Endothelial cell of umbilical vein (primary cell): ENCODE measurements at regions of chr11 and their contacts with region 1.

Region 1: GRCh38 chr11:61446211-61446651 is 16.3 kb downstream of the SDHAF2 start:
- DNase-seq: peak; percentile 93
- H3K4me3 ChIP-seq: no peak overlapping the region
- H3K27ac ChIP-seq: no peak overlapping the region
- H3K4me1 ChIP-seq: no peaks in the 10 kb centered on the region
- H3K27me3 ChIP-seq: no peaks in the 10 kb centered on the region
- CTCF ChIP-seq: peak; percentile 91 to 94
- POLR2A ChIP-seq: no peak

Region 2: GRCh38 chr11:61429691-61430582 is 16.3 kb before region 1 on chr11 and contains the starts of genes CPSF7 and SDHAF2:
- CTCF ChIA-PET with region 1: interaction called, 66 read pairs
- POLR2A ChIA-PET with region 1: no interaction called
- dilution Hi-C with region 1: no loop called
- intact Hi-C with region 1: no loop called
- DNase-seq: peak; percentile 94
- H3K4me3 ChIP-seq: peak within 1 kb of the TSS; percentile 87 to 100 (median 100)
- H3K27ac ChIP-seq: peak within 1 kb of the TSS; percentile 99
- H3K4me1 ChIP-seq: peaks cover 20% of the 10 kb centered on the region
- H3K27me3 ChIP-seq: no peaks in the 10 kb centered on the region
- CTCF ChIP-seq: no peak
- POLR2A ChIP-seq: peak; percentile 91
- total RNA-seq, gene CPSF7: 77.0 and 78.2 TPM in 2 replicates
- total RNA-seq, gene SDHAF2: 40.3 and 44.5 TPM in 2 replicates

Region 3: DNA sequence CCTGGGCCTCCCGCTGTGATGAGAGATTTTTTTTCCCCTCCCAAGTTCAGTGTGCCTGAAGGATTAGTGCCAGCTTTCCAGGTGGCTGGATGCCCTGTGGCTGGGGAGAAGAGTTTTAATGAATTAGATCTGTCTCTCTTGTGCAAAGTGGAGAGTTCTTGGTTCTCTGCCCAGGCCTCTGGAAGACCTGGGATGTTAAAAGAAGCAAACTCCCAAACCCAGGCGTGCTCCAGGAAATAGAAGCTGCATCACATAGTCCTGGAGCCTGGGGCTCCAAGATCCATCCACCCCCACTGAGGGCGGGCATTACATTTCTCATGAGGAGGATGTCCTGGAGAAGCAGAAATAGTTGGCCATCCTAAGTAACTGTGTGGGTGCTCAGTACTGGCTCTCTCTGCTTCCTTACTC is 14.2 kb after region 1 on chr11:
- CTCF ChIA-PET with region 1: interaction called, 35 read pairs
- POLR2A ChIA-PET with region 1: interaction called, 5 read pairs
- dilution Hi-C with region 1: no loop called
- intact Hi-C with region 1: no loop called
- DNase-seq: no peak
- H3K4me3 ChIP-seq: no peak overlapping the region
- H3K27ac ChIP-seq: no peak overlapping the region
- H3K4me1 ChIP-seq: no peaks in the 10 kb centered on the region
- H3K27me3 ChIP-seq: no peaks in the 10 kb centered on the region
- CTCF ChIP-seq: no peak
- POLR2A ChIP-seq: no peak

Region 4: DNA sequence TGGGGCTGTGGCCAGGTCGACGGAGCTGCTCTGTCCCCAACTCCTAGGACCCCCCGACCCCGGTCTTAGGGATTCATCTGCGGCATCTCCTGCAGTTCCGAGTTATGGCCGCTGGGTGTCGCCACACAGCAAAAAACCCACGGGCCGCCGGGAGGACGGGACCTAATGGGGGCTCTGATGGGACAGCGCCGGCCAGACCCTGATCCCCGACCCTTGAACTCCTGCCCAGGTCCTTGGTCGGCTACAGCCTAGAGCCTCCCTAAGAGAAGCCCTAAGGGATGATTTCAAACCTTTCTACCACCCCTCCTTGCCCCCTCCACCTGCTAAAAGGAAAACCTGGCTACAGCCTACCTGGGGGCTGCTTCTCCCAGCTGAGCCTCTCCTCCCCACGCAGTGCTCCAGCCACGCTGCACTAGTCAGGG is 31.5 kb after region 1 on chr11:
- CTCF ChIA-PET with region 1: interaction called, 15 read pairs
- POLR2A ChIA-PET with region 1: no interaction called
- dilution Hi-C with region 1: no loop called
- intact Hi-C with region 1: no loop called
- DNase-seq: peak; percentile 39
- H3K4me3 ChIP-seq: no peak overlapping the region
- H3K27ac ChIP-seq: no peak overlapping the region
- H3K4me1 ChIP-seq: no peaks in the 10 kb centered on the region
- H3K27me3 ChIP-seq: no peaks in the 10 kb centered on the region
- CTCF ChIP-seq: peak; percentile 80 to 89
- POLR2A ChIP-seq: no peak